Mammary epithelial cell (primary cell): ENCODE measurements at regions of chr10 and their contacts with region 1.

Region 1: DNA sequence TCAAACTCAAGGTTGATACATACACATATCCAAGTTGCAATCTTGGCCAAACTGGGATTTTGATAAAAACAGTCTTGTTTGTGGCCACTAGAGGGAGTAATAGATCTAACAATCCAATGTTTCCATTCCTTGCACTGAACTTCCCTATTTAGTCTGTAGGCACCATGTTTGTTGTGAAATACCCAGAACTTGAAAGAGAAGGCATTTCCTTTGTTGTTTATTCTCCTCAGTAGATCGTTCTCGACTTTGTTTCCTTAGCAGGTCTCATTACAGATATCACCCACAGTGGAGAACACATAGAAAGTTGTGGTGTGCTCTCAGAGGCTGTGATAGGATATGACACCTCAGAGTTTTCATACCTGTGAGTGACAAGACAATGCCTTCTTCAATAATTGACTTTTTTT is 70.3 kb upstream of the MXI1 start:
- DNase-seq: peak; percentile 61
- H3K4me3 ChIP-seq: no peak overlapping the region
- H3K27ac ChIP-seq: no peak overlapping the region
- H3K4me1 ChIP-seq: peaks cover 15% of the 10 kb centered on the region
- H3K27me3 ChIP-seq: no peaks in the 10 kb centered on the region
- CTCF ChIP-seq: peak; percentile 60 to 72

Region 2: DNA sequence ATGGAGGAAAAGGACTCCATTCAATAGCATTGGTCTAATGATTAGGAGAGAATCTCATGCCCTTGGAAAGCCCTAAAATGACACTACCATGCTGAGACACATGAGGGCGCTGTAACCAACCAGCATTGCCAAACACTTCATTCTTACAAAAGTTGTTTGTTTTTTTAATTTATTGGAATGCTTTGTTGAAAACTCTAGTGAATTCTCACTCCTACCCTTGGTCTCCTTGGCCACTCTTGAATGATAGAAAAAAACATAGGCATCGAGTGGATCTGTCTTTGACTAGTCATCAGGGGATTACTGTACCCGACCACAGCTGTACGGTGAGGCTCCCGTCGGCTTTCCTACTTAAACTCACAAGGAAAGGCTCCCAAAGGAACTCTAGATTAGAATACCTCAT is 158.7 kb before region 1 on chr10:
- CTCF ChIA-PET with region 1: no interaction called
- dilution Hi-C with region 1: no loop called
- in situ Hi-C with region 1: no loop called
- intact Hi-C with region 1: loop called (anchors 1 kb)
- DNase-seq: peak; percentile 26
- H3K4me3 ChIP-seq: no peak overlapping the region
- H3K27ac ChIP-seq: no peak overlapping the region
- H3K4me1 ChIP-seq: no peaks in the 10 kb centered on the region
- H3K27me3 ChIP-seq: no peaks in the 10 kb centered on the region
- CTCF ChIP-seq: peak; percentile 88 to 96

Region 3: DNA sequence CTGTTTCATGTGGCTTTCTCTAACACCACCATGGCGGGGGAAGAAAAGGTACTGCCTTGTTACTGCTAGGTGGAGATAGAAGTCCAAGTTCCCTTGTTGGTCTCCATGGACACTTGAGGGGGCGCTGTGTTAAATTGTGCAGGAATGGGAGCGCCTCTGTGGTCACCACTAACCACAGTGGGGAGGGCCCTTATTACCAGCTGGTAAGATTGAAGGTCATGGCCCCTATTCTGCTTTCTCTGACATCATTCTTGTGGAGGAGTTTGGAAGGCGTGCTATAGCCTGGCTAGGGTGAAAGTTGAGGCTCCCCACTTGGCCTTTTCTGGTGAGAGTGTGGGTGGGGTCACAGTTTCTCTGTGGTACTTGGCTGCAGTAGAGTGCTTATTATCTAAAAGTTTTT is 55.4 kb after region 1 on chr10:
- CTCF ChIA-PET with region 1: no interaction called
- dilution Hi-C with region 1: no loop called
- in situ Hi-C with region 1: no loop called
- intact Hi-C with region 1: no loop called
- DNase-seq: no peak
- H3K4me3 ChIP-seq: no peak overlapping the region
- H3K27ac ChIP-seq: no peak overlapping the region
- H3K4me1 ChIP-seq: peaks cover 8% of the 10 kb centered on the region
- H3K27me3 ChIP-seq: peaks cover 2% of the 10 kb centered on the region
- CTCF ChIP-seq: no peak

Region 4: GRCh38 chr10:110210674-110211464 is 73.7 kb after region 1 on chr10:
- CTCF ChIA-PET with region 1: interaction called, 11 read pairs
- dilution Hi-C with region 1: no loop called
- in situ Hi-C with region 1: loop called in 1 of 2 experiments (anchors 5 kb)
- intact Hi-C with region 1: loop called (anchors 1 kb)
- DNase-seq: peak; percentile 98
- H3K4me3 ChIP-seq: peak overlapping the region; percentile 75 to 82 (median 76)
- H3K27ac ChIP-seq: peak overlapping the region; percentile 76
- H3K4me1 ChIP-seq: peaks cover 11% of the 10 kb centered on the region
- H3K27me3 ChIP-seq: no peaks in the 10 kb centered on the region
- CTCF ChIP-seq: no peak

Region 5: GRCh38 chr10:110225756-110226542 is 88.8 kb after region 1 on chr10:
- CTCF ChIA-PET with region 1: interaction called, 4 read pairs
- dilution Hi-C with region 1: no loop called
- in situ Hi-C with region 1: no loop called
- intact Hi-C with region 1: loop called (anchors 1 kb)
- DNase-seq: peak; percentile 92
- H3K4me3 ChIP-seq: peak overlapping the region; percentile 73 to 95 (median 92)
- H3K27ac ChIP-seq: peak overlapping the region; percentile 43
- H3K4me1 ChIP-seq: peaks cover 33% of the 10 kb centered on the region
- H3K27me3 ChIP-seq: no peaks in the 10 kb centered on the region
- CTCF ChIP-seq: peak; percentile 54 to 71

Region 6: GRCh38 chr10:110279407-110279986 is 142.4 kb after region 1 on chr10:
- CTCF ChIA-PET with region 1: no interaction called
- dilution Hi-C with region 1: loop called (anchors 25 kb)
- in situ Hi-C with region 1: loop called (anchors 5 kb)
- intact Hi-C with region 1: loop called (anchors 1 kb)
- DNase-seq: peak; percentile 43
- H3K4me3 ChIP-seq: no peak overlapping the region
- H3K27ac ChIP-seq: no peak overlapping the region
- H3K4me1 ChIP-seq: peaks cover 7% of the 10 kb centered on the region
- H3K27me3 ChIP-seq: no peaks in the 10 kb centered on the region
- CTCF ChIP-seq: peak; percentile 75

Region 7: GRCh38 chr10:110567201-110568054 is 430.3 kb after region 1 on chr10 and contains the start of gene SMC3:
- CTCF ChIA-PET with region 1: no interaction called
- dilution Hi-C with region 1: no loop called
- in situ Hi-C with region 1: loop called in 1 of 2 experiments (anchors 25 kb)
- intact Hi-C with region 1: no loop called
- DNase-seq: peak; percentile 91
- H3K4me3 ChIP-seq: peak within 1 kb of the TSS; percentile 63 to 88 (median 88)
- H3K27ac ChIP-seq: peak within 1 kb of the TSS; percentile 98
- H3K4me1 ChIP-seq: no peaks in the 10 kb centered on the region
- H3K27me3 ChIP-seq: no peaks in the 10 kb centered on the region
- CTCF ChIP-seq: no peak
- total RNA-seq, gene SMC3: 10.2 to 34.3 TPM

Region 8: GRCh38 chr10:110600487-110601101 is 463.4 kb after region 1 on chr10:
- CTCF ChIA-PET with region 1: no interaction called
- dilution Hi-C with region 1: no loop called
- in situ Hi-C with region 1: no loop called
- intact Hi-C with region 1: loop called (anchors 5 kb)
- DNase-seq: peak; percentile 43
- H3K4me3 ChIP-seq: no peak overlapping the region
- H3K27ac ChIP-seq: no peak overlapping the region
- H3K4me1 ChIP-seq: no peaks in the 10 kb centered on the region
- H3K27me3 ChIP-seq: no peaks in the 10 kb centered on the region
- CTCF ChIP-seq: peak; percentile 52 to 58

Region 9: GRCh38 chr10:110664483-110665420 is 527.6 kb after region 1 on chr10:
- CTCF ChIA-PET with region 1: no interaction called
- dilution Hi-C with region 1: no loop called
- in situ Hi-C with region 1: no loop called
- intact Hi-C with region 1: no loop called
- DNase-seq: peak; percentile 88
- H3K4me3 ChIP-seq: no peak overlapping the region
- H3K27ac ChIP-seq: peak overlapping the region; percentile 46
- H3K4me1 ChIP-seq: peaks cover 12% of the 10 kb centered on the region
- H3K27me3 ChIP-seq: no peaks in the 10 kb centered on the region
- CTCF ChIP-seq: no peak